ENCODE measurements at regions of chr5 and their contacts with region 1.

Region 1: DNA sequence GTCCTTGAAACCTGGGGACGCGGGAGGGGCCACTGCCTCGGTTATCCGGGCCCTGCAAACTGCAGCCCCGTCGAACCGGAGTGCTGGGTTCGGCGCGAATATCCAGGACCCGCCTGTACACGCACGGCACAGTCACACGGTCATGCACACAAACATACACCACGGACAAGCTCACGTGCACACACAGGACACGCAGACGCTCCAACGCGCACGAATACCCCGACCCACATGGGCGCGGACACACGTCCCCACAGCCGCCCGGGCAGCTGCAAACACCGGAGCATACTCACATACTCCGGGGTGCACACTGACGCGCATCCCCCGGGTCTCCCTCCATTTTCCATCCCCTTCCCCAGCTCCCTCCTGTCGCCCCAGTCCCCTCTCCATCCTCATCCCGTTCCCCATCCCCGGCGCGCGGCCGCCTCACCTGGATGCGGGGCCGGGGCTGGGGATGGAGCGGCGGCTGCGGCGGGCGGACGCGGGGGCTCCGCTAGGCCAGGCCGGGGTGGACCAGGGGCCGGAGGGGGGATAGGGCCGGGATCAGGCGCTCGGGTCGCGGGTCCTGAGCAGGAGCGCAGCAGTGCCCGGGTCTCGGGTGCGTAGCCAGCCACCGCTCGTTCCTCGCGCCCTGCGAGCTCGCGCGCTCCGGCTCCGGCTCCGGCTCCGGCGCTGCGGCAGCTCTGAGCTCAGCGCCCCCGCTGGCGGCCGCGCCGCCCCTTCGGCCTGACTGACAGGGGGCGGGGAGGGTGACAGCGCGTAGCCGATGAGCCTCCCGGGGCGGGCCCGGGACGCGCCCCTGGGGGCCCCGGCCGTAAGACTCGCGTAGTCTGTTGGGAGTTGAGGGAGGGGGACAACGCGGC is at the starts of genes EIF4E1B and SNCB:
- DNase-seq: peak; percentile 91
- H3K4me3 ChIP-seq: peak within 1 kb of the TSS; percentile 40 to 59
- H3K27ac ChIP-seq: no peak within 1 kb of the TSS
- H3K4me1 ChIP-seq: peaks cover 0 to 9% of the 10 kb centered on the region in 2 experiments; a peak in 1 of 4 replicates
- H3K27me3 ChIP-seq: peaks cover 38% of the 10 kb centered on the region; the same call in 1 of the 2 replicates
- CTCF ChIP-seq: peak; percentile 15
- EP300 ChIP-seq: no peak
- RAD21 ChIP-seq: no peak
- polyA plus RNA-seq, gene EIF4E1B: not detected in 2 replicates
- polyA plus RNA-seq, gene SNCB: 0.15 and 0.33 TPM in 2 replicates

Region 2: DNA sequence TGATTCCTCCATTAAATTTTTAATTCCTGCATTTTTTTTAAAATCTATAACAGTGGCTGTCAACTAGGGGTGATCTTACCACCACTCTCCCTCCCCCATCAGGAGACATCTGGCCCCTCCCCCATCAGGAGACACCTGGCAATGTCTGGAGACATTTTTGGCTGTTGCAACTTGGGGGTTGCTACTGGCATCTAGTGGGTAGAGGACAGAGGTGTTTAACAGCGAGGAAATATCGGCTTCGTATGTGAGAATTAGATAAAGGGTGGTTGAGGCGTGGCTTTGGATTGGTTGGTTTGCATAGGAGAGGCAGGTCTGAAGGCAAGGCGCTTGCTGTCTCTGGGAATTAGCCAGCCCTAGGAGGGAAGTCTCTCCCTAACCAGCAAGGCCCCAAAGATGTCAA is 70.4 kb before region 1 on chr5:
- CTCF ChIA-PET with region 1: no interaction called
- POLR2A ChIA-PET with region 1: no interaction called
- DNase-seq: no peak
- H3K4me3 ChIP-seq: no peak overlapping the region
- H3K27ac ChIP-seq: no peak overlapping the region
- H3K4me1 ChIP-seq: no peaks in the 10 kb centered on the region
- H3K27me3 ChIP-seq: no peaks in the 10 kb centered on the region
- CTCF ChIP-seq: no peak
- EP300 ChIP-seq: no peak
- RAD21 ChIP-seq: no peak

Region 3: GRCh38 chr5:176619203-176619568 is 10.9 kb before region 1 on chr5:
- CTCF ChIA-PET with region 1: interaction called, 16 read pairs
- POLR2A ChIA-PET with region 1: no interaction called
- DNase-seq: peak; percentile 98
- H3K4me3 ChIP-seq: peak overlapping the region; percentile 29 to 57; a peak in 3 of 4 replicates
- H3K27ac ChIP-seq: no peak overlapping the region
- H3K4me1 ChIP-seq: peaks cover 6 to 26% of the 10 kb centered on the region in 2 experiments; a peak in 3 of 4 replicates
- H3K27me3 ChIP-seq: peaks cover 21% of the 10 kb centered on the region
- CTCF ChIP-seq: peak; percentile 59
- EP300 ChIP-seq: no peak
- RAD21 ChIP-seq: peak; percentile 79

Region 4: DNA sequence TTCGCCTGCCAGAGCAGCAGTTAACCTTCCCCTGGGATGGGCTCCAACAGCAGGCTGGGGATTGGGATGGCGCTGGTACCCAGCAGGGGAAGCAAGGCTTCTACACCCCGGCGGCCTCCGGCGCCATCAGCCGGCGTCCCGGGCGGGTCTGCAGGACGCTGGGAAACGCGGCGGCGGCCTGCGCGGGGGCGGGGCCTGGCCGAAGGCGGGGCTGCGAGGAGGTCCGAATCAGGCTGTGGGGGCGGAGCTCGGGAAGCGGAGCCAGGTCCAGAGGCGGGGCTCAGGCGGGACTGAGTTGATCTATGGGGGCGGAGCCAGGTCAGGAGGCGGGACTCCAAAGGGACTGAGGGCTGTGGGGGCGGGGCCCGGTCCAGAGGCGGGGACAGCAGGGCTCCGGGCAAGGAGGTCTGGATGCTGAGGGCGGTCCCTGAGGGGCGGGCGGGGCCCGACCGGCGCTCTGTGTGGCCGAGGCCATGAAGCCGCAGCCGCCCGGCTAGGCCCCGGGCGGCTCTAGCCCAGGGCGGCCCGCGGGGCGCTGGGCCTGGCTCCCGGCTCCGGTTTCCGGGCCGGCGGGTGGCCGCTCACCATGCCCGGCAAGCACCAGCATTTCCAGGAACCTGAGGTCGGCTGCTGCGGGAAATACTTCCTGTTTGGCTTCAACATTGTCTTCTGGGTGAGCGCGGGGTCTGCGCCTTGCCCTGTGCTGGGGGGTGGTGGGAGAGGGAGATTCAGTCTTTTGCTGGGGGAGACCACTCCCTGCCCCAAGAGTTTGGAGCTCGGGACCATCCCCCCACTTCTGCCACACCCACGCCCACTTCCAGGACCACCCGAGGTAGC is 17.2 kb after region 1 on chr5 and contains the start of gene TSPAN17:
- CTCF ChIA-PET with region 1: interaction called, 16 read pairs
- POLR2A ChIA-PET with region 1: interaction called, 6 read pairs
- DNase-seq: peak; percentile 100
- H3K4me3 ChIP-seq: peak within 1 kb of the TSS; percentile 89 to 94
- H3K27ac ChIP-seq: peak within 1 kb of the TSS; percentile 52 to 87; a peak in 3 of 4 replicates
- H3K4me1 ChIP-seq: peaks cover 4 to 42% of the 10 kb centered on the region in 2 experiments; a peak in 2 of 4 replicates
- H3K27me3 ChIP-seq: no peaks in the 10 kb centered on the region
- CTCF ChIP-seq: peak; percentile 46
- EP300 ChIP-seq: no peak; a peak in 1 of 4 replicates
- RAD21 ChIP-seq: peak; percentile 69
- polyA plus RNA-seq, gene TSPAN17: 61.7 and 68.4 TPM in 2 replicates

Region 5: GRCh38 chr5:176675675-176676360 is 45.7 kb after region 1 on chr5:
- CTCF ChIA-PET with region 1: no interaction called
- POLR2A ChIA-PET with region 1: no interaction called
- DNase-seq: no peak
- H3K4me3 ChIP-seq: no peak overlapping the region; a peak in 1 of 4 replicates
- H3K27ac ChIP-seq: no peak overlapping the region
- H3K4me1 ChIP-seq: peaks cover 0 to 7% of the 10 kb centered on the region in 2 experiments; a peak in 1 of 4 replicates
- H3K27me3 ChIP-seq: no peaks in the 10 kb centered on the region
- CTCF ChIP-seq: peak; percentile 53
- EP300 ChIP-seq: no peak
- RAD21 ChIP-seq: no peak

Region 6: DNA sequence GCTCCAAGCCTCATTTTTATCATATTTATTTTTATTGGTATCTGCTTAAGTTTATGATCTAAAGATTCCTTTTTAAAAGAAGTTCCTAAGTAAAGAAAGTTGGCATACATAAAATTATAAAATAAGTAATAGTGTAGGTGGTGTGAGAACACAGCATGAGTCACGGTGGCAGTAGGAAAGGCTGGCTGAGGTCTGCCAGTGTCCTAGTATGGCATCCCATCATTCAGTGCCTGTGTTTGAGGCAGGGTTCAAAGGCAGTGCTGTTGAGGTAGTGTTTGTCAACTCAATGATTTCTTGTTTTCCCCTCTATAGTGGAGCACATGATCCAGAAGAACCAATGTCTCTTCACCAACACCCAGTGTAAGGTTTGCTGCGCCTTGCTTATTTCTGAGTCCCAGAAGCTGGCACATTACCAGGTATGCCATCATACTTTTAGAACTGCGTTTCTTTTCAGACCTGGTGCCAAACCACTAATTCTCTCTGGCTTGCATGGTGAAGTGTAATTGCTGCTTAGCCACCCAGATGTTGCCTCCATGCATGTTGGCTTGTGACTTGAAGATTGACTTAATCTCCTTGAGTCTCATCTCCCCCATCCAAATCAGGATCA is 410.8 kb after region 1 on chr5:
- CTCF ChIA-PET with region 1: no interaction called
- POLR2A ChIA-PET with region 1: no interaction called
- DNase-seq: no peak
- H3K4me3 ChIP-seq: no peak overlapping the region
- H3K27ac ChIP-seq: no peak overlapping the region
- H3K4me1 ChIP-seq: no peaks in the 10 kb centered on the region
- H3K27me3 ChIP-seq: no peaks in the 10 kb centered on the region
- CTCF ChIP-seq: no peak
- EP300 ChIP-seq: no peak
- RAD21 ChIP-seq: no peak